HCT116 (cell line): ENCODE measurements at regions of chr7 and their contacts with region 1.

Region 1: DNA sequence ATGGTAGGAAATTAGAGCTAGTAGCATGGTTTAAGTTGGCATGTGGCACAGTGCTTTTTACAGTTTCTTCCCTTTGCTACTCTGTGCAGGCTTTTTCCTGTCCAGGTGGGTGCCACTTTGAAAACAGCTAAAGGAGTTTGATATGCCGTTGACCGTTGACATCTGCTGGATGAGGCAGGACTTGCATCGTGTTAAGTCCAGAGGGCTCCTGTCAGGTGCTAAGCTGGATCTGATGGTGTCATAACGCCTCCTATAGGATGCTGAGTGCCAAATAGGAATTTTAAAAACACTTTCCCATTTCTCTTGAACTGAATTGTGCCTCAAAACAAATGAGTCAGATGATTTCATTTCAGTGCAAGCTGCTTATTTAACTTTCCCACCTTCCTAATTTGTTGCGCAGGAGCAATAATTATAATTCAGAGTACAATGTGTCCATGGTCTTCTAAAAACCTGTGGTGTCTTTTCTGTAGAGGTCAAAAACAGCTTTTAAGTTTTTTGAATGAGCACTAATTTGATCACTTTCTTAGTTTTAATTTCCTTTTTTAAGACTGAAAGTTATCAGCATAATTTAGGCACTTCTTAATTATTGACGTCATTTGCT is 178.3 kb downstream of the CDCA7L start:
- DNase-seq: peak; percentile 91
- ATAC-seq: peak; percentile 100
- H3K4me3 ChIP-seq: no peak overlapping the region
- H3K27ac ChIP-seq: no peak overlapping the region
- H3K4me1 ChIP-seq: no peaks in the 10 kb centered on the region
- H3K27me3 ChIP-seq: no peaks in the 10 kb centered on the region
- CTCF ChIP-seq: peak; percentile 85 to 98 (median 92)
- POLR2A ChIP-seq: no peak
- RAD21 ChIP-seq: peak; percentile 97

Region 2: DNA sequence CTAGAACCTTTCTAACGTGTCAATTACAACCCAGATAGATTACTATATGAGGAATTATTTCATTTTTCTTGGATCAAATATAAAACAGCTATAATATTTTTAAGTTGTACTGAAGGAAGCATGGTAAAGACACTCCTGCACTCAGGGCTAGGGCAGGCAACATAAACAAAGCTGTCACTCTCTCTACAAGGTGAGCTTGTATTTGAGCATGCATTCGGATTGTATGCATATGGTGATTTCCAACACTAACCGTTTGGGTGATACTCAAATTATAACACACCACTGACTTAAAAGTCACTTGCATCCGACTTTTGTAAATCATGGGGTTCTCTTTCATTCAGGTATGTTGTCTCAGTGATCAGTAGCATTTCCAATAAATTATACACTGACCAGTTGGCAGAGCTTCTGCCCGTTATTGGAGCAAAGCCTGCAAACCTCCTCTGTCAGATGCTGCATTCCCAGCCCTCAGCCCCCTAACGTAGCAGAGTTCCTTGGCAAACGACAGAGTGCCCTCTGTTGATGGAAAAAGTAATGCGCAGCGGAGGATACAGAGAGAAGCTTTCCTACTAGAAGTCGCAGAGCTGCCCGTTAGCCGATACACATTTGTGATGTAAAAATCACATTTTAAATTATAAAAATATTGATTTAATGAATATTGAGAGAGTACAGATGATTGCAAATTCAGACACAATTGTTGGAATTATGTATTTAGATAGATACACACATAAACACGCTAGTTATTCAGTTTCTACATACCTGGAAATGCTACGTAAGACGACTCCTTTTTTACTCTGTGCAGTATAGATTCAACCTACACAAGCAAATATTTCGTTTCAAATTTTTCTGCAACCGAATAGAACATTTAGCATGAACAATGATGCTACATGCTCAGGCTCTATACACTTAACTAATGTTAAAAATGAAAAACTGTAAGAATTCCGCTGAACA is 513.4 kb before region 1 on chr7:
- CTCF ChIA-PET with region 1: interaction called, 65 read pairs
- POLR2A ChIA-PET with region 1: no interaction called
- RAD21 ChIA-PET with region 1: interaction called, 3 to 7 read pairs
- intact Hi-C with region 1: no loop called
- DNase-seq: peak; percentile 51
- ATAC-seq: peak; percentile 93
- H3K4me3 ChIP-seq: no peak overlapping the region
- H3K27ac ChIP-seq: no peak overlapping the region
- H3K4me1 ChIP-seq: no peaks in the 10 kb centered on the region
- H3K27me3 ChIP-seq: peaks cover 25% of the 10 kb centered on the region
- CTCF ChIP-seq: peak; percentile 67 to 74 (median 70); a peak in 5 of 6 replicates
- POLR2A ChIP-seq: no peak
- RAD21 ChIP-seq: peak; percentile 81

Region 3: DNA sequence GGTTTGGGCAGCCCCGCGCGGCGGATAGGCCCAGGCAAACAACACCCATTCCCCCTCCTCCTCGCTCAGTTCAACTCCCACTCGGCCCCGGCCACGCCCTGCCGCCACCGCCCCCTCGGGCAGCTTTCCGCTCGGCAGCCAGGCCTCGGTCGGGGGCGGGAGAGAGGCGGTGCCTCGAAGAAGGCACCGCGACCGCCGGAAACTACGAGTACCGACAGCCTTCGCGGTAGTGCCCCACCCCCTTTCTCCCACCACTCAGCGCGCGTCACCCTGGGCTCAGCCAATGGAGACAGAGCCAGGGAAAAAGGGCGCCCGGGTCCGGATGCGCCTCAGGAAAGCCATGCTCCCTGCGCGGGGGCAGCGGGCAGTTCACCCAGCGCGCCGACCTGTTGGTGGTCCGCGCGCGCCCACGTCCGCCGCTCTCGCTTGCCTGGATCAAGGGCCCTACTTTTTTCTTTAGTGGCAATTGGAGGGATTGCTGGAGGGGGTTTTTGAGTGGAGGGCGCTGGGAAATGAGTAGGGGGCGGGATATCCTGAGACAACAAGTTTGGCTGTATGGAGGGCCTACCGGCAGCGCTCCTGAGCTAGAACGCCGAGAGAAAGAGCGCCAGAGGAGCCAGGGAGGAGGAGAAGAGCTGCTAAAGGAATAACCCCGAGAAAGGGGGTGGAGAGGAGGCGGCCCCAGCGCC is 340.1 kb before region 1 on chr7:
- CTCF ChIA-PET with region 1: no interaction called
- POLR2A ChIA-PET with region 1: no interaction called
- RAD21 ChIA-PET with region 1: no interaction called
- intact Hi-C with region 1: no loop called
- DNase-seq: peak; percentile 94
- ATAC-seq: peak; percentile 79
- H3K4me3 ChIP-seq: peak overlapping the region; percentile 55 to 60
- H3K27ac ChIP-seq: peak overlapping the region; percentile 88
- H3K4me1 ChIP-seq: peaks cover 5 to 16% of the 10 kb centered on the region in 2 experiments; a peak in 3 of 4 replicates
- H3K27me3 ChIP-seq: no peaks in the 10 kb centered on the region
- CTCF ChIP-seq: no peak
- POLR2A ChIP-seq: peak; percentile 11
- RAD21 ChIP-seq: no peak

Region 4: GRCh38 chr7:21514062-21514461 is 253.3 kb before region 1 on chr7:
- CTCF ChIA-PET with region 1: no interaction called
- POLR2A ChIA-PET with region 1: no interaction called
- RAD21 ChIA-PET with region 1: no interaction called
- intact Hi-C with region 1: loop called (anchors 10 kb)
- DNase-seq: no peak
- ATAC-seq: no peak
- H3K4me3 ChIP-seq: no peak overlapping the region
- H3K27ac ChIP-seq: no peak overlapping the region
- H3K4me1 ChIP-seq: no peaks in the 10 kb centered on the region
- H3K27me3 ChIP-seq: no peaks in the 10 kb centered on the region
- CTCF ChIP-seq: no peak
- POLR2A ChIP-seq: no peak
- RAD21 ChIP-seq: no peak

Region 5: DNA sequence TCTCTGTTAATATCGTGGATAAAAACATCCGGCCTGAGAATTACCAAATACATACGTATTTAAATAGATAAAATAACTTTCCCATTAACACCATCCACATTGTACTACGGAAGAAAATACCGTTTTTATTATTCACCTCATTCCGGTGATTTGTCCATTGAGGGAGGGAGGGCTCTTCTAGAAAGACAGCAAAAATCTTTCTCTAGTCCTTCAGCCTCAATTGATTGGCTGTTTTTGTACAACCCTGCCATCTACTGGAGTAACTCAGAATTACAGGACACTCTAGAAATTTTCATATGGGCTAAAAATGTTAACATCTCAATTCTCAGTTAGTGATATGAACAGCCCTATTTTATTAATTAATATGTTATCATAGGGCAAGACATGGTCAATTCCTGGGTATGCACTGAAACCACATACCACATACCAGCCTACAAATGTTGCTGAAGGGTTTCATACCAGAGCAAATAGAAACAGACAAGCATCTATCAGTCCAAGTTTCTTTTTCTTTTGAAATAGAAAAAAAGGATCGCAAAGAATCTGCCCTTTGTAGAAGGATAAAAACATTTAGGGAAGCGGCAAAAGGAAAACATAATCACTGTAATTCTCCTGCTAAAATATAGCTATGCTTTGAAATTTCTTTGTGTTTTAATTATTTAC is 234.1 kb after region 1 on chr7:
- CTCF ChIA-PET with region 1: interaction called, 5 read pairs
- POLR2A ChIA-PET with region 1: no interaction called
- RAD21 ChIA-PET with region 1: no interaction called
- intact Hi-C with region 1: loop called (anchors 2 kb)
- DNase-seq: peak; percentile 36
- ATAC-seq: peak; percentile 92
- H3K4me3 ChIP-seq: no peak overlapping the region
- H3K27ac ChIP-seq: no peak overlapping the region
- H3K4me1 ChIP-seq: 0 out of 4 replicates have a peak, but pooled peaks cover 0 to 3% of the 10 kb centered on the region in 2 experiments
- H3K27me3 ChIP-seq: peaks cover 6% of the 10 kb centered on the region; the same call in 1 of the 2 replicates
- CTCF ChIP-seq: peak; percentile 57 to 80 (median 70); a peak in 5 of 6 replicates
- POLR2A ChIP-seq: no peak
- RAD21 ChIP-seq: peak; percentile 91